ENCODE measurements at regions of chr10 and their contacts with region 1.

Region 1: GRCh38 chr10:114526504-114527238 is 122.4 kb upstream of the AFAP1L2 start:
- DNase-seq: peak; percentile 86 to 93
- H3K4me3 ChIP-seq: peak overlapping the region; percentile 40
- H3K4me3 Mint-ChIP-seq: peak overlapping the region; percentile 98
- H3K27ac Mint-ChIP-seq: peak overlapping the region; percentile 98
- H3K4me1 ChIP-seq: peaks cover 6% of the 10 kb centered on the region
- H3K4me1 Mint-ChIP-seq: peaks cover 13% of the 10 kb centered on the region
- H3K27me3 ChIP-seq: no peaks in the 10 kb centered on the region
- H3K27me3 Mint-ChIP-seq: no peaks in the 10 kb centered on the region
- CTCF ChIP-seq: no peak

Region 2: DNA sequence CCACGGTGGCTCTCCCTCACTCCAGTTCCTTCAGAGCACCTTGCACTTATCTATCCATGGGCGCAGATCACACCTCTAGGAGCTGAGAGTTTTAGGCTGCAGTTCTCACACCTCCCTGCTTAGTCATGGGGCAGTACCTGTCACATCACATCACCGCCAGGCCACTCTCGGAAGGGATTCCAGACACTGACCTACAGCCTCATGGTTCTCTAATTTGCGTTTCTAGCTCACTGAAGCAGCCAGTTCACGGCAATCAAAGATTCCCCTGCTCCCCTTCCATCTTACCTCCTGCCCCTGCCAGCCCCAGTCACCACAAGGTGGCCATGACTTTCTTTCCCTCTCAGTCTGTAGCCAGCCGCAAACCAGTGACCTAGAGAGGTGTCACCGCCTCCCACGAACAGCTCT is 448.9 kb before region 1 on chr10:
- CTCF ChIA-PET with region 1: no interaction called
- POLR2A ChIA-PET with region 1: no interaction called
- intact Hi-C with region 1: no loop called
- DNase-seq: no peak
- H3K4me3 ChIP-seq: no peak overlapping the region
- H3K4me3 Mint-ChIP-seq: no peak overlapping the region
- H3K27ac Mint-ChIP-seq: no peak overlapping the region
- H3K4me1 ChIP-seq: peaks cover 9% of the 10 kb centered on the region; the same call in 1 of the 2 replicates
- H3K4me1 Mint-ChIP-seq: no peaks in the 10 kb centered on the region
- H3K27me3 ChIP-seq: no peaks in the 10 kb centered on the region
- H3K27me3 Mint-ChIP-seq: no peaks in the 10 kb centered on the region
- CTCF ChIP-seq: no peak

Region 3: GRCh38 chr10:114504769-114505579 is 21.7 kb before region 1 on chr10:
- CTCF ChIA-PET with region 1: interaction called, 4 read pairs
- POLR2A ChIA-PET with region 1: interaction called, 5 read pairs
- intact Hi-C with region 1: loop called (anchors 1 kb)
- DNase-seq: peak in 1 of 2 experiments; percentile 50
- H3K4me3 ChIP-seq: no peak overlapping the region
- H3K4me3 Mint-ChIP-seq: no peak overlapping the region
- H3K27ac Mint-ChIP-seq: peak overlapping the region; percentile 3
- H3K4me1 ChIP-seq: peaks cover 18% of the 10 kb centered on the region
- H3K4me1 Mint-ChIP-seq: peaks cover 14% of the 10 kb centered on the region
- H3K27me3 ChIP-seq: no peaks in the 10 kb centered on the region
- H3K27me3 Mint-ChIP-seq: no peaks in the 10 kb centered on the region
- CTCF ChIP-seq: no peak